Activated CD4-positive, alpha-beta memory T cell treated with anti-CD3 and anti-CD28 coated beads for 36 hours (primary cell): ENCODE measurements at regions of chr10 and their contacts with region 1.

Region 1: GRCh38 chr10:110137142-110137545 is 70.3 kb upstream of the MXI1 start:
- DNase-seq: no peak
- H3K4me3 Mint-ChIP-seq: no peak overlapping the region
- H3K27ac Mint-ChIP-seq: peak overlapping the region; percentile 6
- H3K4me1 Mint-ChIP-seq: peaks cover 37% of the 10 kb centered on the region
- H3K27me3 Mint-ChIP-seq: no peaks in the 10 kb centered on the region

Region 2: DNA sequence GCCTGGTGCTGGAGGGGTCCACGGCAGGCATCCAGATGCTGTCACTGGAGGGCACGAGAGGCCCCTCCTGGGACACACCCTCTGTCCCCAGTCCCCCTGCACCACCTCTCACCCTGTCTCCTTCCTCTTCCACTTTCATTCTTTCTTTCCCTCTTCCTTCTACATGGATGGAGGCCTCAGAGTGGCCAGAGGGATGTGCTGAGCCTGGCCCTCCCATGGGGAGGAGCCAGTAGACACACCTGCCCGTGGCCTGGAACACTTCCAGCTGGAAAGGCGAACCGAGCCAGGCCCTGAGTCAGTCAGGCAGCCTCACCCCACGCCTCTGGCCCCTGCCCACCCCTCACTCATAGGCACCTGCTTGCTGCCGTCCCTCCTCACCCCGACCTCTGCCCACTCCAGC is 14.3 kb after region 1 on chr10:
- CTCF ChIA-PET with region 1: interaction called, 10 read pairs
- POLR2A ChIA-PET with region 1: no interaction called
- intact Hi-C with region 1: loop called (anchors 2 kb)
- DNase-seq: no peak
- H3K4me3 Mint-ChIP-seq: no peak overlapping the region
- H3K27ac Mint-ChIP-seq: no peak overlapping the region
- H3K4me1 Mint-ChIP-seq: peaks cover 7% of the 10 kb centered on the region
- H3K27me3 Mint-ChIP-seq: peaks cover 48% of the 10 kb centered on the region

Region 3: GRCh38 chr10:110225756-110226542 is 88.8 kb after region 1 on chr10:
- CTCF ChIA-PET with region 1: interaction called, 13 read pairs
- POLR2A ChIA-PET with region 1: interaction called, 3 read pairs
- intact Hi-C with region 1: loop called (anchors 1 kb)
- DNase-seq: peak; percentile 92
- H3K4me3 Mint-ChIP-seq: peak overlapping the region; percentile 98
- H3K27ac Mint-ChIP-seq: peak overlapping the region; percentile 96
- H3K4me1 Mint-ChIP-seq: peaks cover 41% of the 10 kb centered on the region
- H3K27me3 Mint-ChIP-seq: no peaks in the 10 kb centered on the region

Region 4: DNA sequence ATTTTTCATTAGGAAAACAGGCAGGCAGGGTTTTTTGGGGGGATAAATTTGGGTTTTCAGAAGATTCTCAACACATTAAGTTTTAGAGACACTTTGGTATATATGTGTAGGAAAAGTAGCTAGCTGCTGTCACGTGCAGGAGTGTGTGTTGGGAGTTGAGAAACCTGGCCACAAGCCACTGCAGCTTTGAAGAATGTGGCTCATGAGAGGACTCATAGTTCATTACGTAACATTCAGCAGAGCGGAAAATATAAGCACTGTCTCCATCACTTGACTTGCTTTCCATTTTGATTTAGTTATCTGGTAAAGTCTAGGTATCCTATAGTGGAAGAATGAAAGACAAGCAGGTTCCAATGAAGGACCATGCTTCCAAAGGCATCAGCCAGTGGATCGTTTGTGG is 136.3 kb after region 1 on chr10:
- CTCF ChIA-PET with region 1: interaction called, 60 read pairs
- POLR2A ChIA-PET with region 1: no interaction called
- intact Hi-C with region 1: no loop called
- DNase-seq: peak; percentile 60
- H3K4me3 Mint-ChIP-seq: no peak overlapping the region
- H3K27ac Mint-ChIP-seq: no peak overlapping the region
- H3K4me1 Mint-ChIP-seq: peaks cover 50% of the 10 kb centered on the region
- H3K27me3 Mint-ChIP-seq: no peaks in the 10 kb centered on the region

Region 5: DNA sequence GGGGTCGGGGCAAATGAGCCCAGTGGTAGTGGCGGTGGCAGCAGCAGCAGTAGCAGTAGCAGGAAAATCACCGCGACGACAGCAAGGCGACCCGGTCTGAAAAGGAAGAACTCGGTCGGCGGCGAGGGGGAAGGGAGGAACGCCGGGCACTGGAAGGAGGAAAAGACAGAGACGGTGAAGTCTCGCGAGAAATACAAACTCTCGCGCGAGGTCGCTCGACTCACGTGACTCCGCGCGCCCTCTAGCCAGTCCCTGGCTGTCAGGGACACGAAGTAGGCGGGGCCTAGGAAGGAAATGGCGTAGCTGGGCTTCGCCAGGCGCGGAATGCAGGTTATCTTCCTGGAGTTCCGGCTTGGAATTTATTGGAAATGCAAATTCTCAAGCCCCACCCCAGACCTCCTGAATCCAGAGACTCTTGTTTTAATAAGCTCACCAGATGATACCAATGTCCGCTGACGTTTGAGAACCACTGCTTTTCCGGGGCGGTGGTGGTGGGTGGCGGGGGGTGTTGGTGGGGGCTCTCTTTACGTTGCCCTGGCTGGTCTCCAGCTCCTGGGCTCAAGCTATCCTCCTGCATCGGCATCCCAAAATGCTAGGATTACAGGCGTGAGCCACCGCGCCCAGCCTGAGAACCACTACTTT is 167.8 kb after region 1 on chr10 and contains the start of gene SMNDC1:
- CTCF ChIA-PET with region 1: interaction called, 7 read pairs
- POLR2A ChIA-PET with region 1: interaction called, 3 read pairs
- intact Hi-C with region 1: loop called (anchors 1 kb)
- DNase-seq: peak; percentile 99
- H3K4me3 Mint-ChIP-seq: peak within 1 kb of the TSS; percentile 93
- H3K27ac Mint-ChIP-seq: peak within 1 kb of the TSS; percentile 97
- H3K4me1 Mint-ChIP-seq: peaks cover 49% of the 10 kb centered on the region
- H3K27me3 Mint-ChIP-seq: no peaks in the 10 kb centered on the region
- total RNA-seq, gene SMNDC1: 44.1 to 48.3 TPM